ENCODE measurements at regions of chr3 and their contacts with region 1.

Region 1: DNA sequence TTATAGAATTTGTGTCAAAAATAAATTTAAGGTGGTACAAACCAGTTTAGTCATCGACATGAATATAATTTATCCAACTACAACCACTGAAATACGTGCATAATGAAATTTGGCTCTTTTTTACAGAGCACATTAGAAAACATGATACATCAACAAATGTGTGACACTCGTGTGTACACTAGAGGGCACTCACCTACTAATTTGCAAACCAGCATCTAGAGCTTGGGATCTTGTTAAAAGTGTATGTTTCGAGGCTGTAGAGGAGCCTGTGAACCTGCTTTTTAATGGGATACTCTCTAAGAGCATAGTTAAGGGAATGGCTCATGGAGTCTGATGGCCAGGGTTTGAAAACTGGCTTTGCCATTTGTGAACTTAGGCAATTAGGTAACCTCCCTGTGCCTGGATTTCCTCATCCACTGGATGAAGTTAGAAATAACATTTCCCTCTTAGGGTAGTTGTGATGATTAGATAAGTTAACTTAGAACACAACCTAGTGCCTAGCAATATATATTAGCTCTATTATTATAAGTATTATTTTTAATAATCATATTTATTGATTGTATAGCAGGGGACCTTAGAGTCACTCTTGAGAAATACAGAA is 8.8 kb upstream of the CPOX start:
- DNase-seq: peak; percentile 78
- ATAC-seq: peak; percentile 86
- H3K4me3 ChIP-seq: no peak overlapping the region
- H3K27ac ChIP-seq: no peak overlapping the region
- H3K4me1 ChIP-seq: no peaks in the 10 kb centered on the region
- H3K27me3 ChIP-seq: no peaks in the 10 kb centered on the region
- CTCF ChIP-seq: peak; percentile 96

Region 2: GRCh38 chr3:98058244-98058960 is 543.8 kb before region 1 on chr3:
- CTCF ChIA-PET with region 1: no interaction called
- POLR2A ChIA-PET with region 1: no interaction called
- intact Hi-C with region 1: no loop called
- DNase-seq: no peak
- ATAC-seq: no peak
- H3K4me3 ChIP-seq: no peak overlapping the region
- H3K27ac ChIP-seq: no peak overlapping the region
- H3K4me1 ChIP-seq: no peaks in the 10 kb centered on the region
- H3K27me3 ChIP-seq: peaks cover 14% of the 10 kb centered on the region; the same call in 1 of the 2 replicates
- CTCF ChIP-seq: no peak

Region 3: DNA sequence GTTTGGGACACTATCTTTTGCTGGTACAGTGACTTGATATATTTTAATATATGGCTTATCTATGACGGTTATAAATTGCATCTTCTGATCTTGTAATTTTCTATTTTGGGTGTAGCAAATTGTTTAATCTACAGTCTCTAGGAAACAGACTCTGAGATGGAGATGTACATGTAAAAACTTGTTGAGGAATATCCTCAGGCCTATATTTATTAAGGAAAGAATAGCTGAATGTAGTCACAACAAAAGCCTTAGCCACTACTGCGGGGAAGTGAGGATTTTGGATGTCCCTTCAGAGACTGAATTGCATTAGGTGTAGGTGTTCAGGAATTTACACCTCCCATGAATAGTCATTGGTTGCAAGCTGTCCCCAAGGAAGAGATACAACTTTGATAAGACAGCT is 225.5 kb before region 1 on chr3:
- CTCF ChIA-PET with region 1: no interaction called
- POLR2A ChIA-PET with region 1: no interaction called
- intact Hi-C with region 1: no loop called
- DNase-seq: no peak
- ATAC-seq: no peak
- H3K4me3 ChIP-seq: no peak overlapping the region
- H3K27ac ChIP-seq: no peak overlapping the region
- H3K4me1 ChIP-seq: no peaks in the 10 kb centered on the region
- H3K27me3 ChIP-seq: peaks cover 19% of the 10 kb centered on the region
- CTCF ChIP-seq: no peak

Region 4: DNA sequence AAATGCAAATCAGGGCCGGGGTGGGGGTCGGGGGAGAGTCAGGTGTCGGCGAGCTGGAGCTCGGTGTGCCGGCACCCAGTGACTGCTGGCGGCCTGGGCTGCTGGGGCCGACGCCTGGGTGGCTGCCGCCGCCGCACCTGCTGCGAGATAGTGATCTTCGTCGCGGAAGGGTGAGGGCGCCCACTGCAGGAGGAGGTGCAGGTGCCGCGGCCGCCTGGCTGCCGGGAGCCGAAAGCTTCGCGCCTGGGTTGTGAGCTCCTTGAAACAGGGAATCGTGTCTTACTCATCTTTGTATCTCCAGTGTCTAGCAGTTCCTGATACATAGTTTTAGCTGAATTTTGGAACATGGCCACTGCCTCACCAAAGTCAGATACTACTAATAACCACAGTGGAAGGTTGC is 55.3 kb after region 1 on chr3:
- CTCF ChIA-PET with region 1: interaction called, 17 read pairs
- POLR2A ChIA-PET with region 1: no interaction called
- intact Hi-C with region 1: loop called (anchors 1 kb)
- DNase-seq: peak; percentile 69
- ATAC-seq: peak; percentile 97
- H3K4me3 ChIP-seq: peak overlapping the region; percentile 55
- H3K27ac ChIP-seq: no peak overlapping the region
- H3K4me1 ChIP-seq: peaks cover 4% of the 10 kb centered on the region; the same call in 1 of the 2 replicates
- H3K27me3 ChIP-seq: no peaks in the 10 kb centered on the region
- CTCF ChIP-seq: peak; percentile 75

Region 5: DNA sequence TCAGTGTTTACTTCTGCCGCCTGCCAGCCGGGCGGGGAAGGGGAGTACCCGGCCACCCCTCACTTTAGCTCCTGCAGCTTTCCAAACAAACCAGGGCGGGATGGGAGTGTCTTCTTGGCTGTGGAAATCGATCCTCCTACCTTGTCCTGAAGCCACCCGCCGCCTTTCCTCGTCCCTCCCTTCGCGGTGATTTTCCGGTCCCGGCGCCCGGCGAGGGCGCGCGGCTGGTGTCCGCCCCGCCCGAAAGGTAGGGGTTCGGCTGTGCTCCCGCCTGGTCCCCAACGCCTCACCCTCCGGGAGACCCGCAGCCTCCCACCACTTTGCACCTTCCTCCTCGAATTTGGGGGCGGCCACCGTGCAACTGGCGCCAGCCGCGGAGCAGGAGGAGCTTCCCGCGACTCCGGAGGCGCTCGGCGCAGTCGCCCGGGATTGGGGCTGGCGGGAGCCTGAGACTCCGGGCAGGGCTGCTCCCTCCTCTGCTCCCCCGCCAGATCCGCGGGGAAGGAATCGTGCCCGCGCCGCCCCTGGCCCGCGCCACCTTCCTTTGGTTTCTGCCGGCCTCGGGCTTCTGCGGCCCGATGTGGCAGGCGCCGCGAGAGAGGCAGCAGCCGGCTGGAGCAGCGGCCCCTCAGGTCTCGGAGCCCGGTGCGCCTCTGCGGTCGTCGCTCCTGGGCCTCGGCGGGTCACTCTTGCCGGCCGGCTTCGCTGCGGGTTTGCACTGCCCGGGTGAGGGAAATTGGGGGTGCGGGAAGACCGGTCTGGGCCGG is 130.3 kb after region 1 on chr3:
- CTCF ChIA-PET with region 1: interaction called, 17 read pairs
- POLR2A ChIA-PET with region 1: no interaction called
- intact Hi-C with region 1: no loop called
- DNase-seq: peak; percentile 67
- ATAC-seq: peak; percentile 62
- H3K4me3 ChIP-seq: peak overlapping the region; percentile 96
- H3K27ac ChIP-seq: peak overlapping the region; percentile 33
- H3K4me1 ChIP-seq: peaks cover 48% of the 10 kb centered on the region
- H3K27me3 ChIP-seq: no peaks in the 10 kb centered on the region
- CTCF ChIP-seq: no peak

Region 6: DNA sequence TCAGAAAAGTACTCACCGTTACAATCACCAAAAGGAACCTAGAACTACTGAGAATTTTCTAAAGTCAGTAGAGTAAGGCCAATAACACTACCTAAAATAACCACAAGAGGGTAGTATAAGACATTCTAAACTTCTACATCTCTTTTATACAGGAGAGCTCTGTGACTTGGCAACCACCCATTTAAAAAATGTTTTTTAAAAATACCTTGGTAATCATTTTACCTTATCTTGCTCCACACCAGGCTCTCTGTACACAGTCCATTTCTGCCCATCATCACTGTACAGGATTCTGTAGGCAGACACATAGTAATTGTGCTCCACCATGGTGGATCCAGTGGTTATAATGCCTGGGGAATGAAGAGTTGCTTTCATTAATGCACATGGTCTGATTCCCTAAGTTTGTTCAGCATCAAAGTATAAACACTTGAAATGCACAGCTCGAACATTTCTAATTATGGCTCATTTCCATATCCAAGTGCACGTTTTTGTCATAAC is 215.4 kb after region 1 on chr3:
- CTCF ChIA-PET with region 1: interaction called, 4 read pairs
- POLR2A ChIA-PET with region 1: no interaction called
- intact Hi-C with region 1: loop called (anchors 1 kb)
- DNase-seq: peak; percentile 89
- ATAC-seq: peak; percentile 42
- H3K4me3 ChIP-seq: no peak overlapping the region
- H3K27ac ChIP-seq: peak overlapping the region; percentile 21
- H3K4me1 ChIP-seq: peaks cover 31% of the 10 kb centered on the region
- H3K27me3 ChIP-seq: no peaks in the 10 kb centered on the region
- CTCF ChIP-seq: peak; percentile 84

Region 7: DNA sequence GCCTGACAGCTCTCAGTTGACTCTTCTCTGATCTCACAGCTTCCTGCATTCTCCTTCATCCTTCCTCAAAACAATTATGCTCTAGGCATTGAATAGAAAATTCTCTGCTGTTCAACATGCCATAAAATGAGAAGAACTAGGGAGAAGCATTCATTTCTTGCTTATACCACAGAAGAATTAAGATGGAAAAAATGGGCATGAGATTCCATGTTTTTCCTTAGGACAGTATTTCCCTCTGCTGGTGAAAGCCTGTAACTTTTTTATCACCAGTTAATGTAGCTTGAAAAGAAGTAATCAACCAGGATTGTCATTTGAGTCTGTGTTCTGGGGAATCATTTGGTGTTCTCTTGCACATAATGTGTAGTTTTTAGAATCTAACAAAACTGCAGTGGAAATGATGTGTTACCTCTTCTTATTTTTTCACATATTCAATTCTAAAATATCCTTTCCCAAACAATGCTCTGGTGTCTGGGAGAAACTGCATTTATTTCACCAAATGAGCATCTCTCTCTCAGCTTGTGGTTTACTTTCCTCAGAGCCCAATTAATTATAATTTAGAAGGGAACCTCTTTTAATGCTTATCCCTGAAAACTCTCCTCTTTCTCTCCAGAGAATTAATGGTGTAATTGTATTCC is 392.1 kb after region 1 on chr3:
- CTCF ChIA-PET with region 1: no interaction called
- POLR2A ChIA-PET with region 1: no interaction called
- intact Hi-C with region 1: loop called (anchors 2 kb)
- DNase-seq: peak; percentile 84
- ATAC-seq: peak; percentile 70
- H3K4me3 ChIP-seq: no peak overlapping the region
- H3K27ac ChIP-seq: peak overlapping the region; percentile 7; the same call in 1 of the 2 replicates
- H3K4me1 ChIP-seq: peaks cover 7% of the 10 kb centered on the region; the same call in 1 of the 2 replicates
- H3K27me3 ChIP-seq: no peaks in the 10 kb centered on the region
- CTCF ChIP-seq: peak; percentile 93

Measured in PC-3 (cell line).